Activated CD8-positive, alpha-beta T cell treated with anti-CD3 and anti-CD28 coated beads, Interleukin-2, amount 10 ng/mL, durations not matched to agents 7 days and 5 days (primary cell): ENCODE measurements at regions of chr19 and their contacts with region 1.

Region 1: DNA sequence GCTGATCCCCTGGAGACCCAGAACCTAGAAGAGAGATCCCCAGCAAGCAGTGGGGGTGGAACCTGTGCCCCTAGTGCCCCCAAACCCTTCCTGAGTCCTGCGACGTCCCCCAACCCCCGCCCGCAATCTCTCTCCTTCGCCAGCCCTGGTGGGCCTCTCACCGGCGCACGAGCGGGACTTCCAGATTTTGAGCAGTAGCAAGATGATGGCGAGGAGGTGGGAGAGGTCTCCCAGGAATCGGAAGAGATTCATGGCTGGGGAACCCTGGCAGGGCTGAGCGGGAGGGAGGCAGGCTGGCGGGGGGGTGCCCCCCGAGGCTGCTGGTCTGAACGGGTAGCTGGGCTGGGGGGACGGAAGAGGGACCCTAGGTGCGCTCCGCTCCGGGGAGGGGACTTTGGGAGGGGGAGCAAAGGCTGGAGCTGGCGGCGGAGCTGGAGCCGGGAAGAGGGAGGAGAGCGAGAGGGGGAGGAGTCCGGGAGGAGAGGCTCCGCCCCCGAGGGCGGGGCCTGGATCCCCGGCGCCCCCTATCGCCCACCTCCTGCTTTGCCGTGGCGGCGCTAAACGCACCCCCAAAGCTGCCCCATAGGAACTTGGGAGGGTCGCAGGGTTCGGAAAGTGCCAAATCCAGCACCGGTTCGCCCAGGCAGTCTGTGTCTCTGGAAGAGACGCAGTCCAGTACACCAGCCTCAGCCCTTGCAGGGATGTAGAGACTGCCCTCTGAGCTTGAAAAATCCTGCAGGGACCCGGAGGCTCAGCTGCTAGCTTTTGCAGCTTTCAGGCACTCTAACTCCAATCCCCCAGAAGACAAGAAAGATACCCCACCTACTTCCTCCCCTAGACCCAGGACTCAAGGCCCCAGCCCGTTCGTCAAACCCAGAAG is at the start of gene KDELR1:
- DNase-seq: peak; percentile 76
- ATAC-seq: peak; percentile 81
- H3K4me3 Mint-ChIP-seq: peak within 1 kb of the TSS; percentile 95
- H3K27ac Mint-ChIP-seq: peak within 1 kb of the TSS; percentile 93
- H3K4me1 Mint-ChIP-seq: peaks cover 30% of the 10 kb centered on the region
- H3K27me3 Mint-ChIP-seq: peaks cover 39% of the 10 kb centered on the region
- total RNA-seq, gene KDELR1: 70.3 to 71.3 TPM

Region 2: GRCh38 chr19:48321622-48322591 is 69.4 kb before region 1 on chr19:
- CTCF ChIA-PET with region 1: interaction called, 10 read pairs
- POLR2A ChIA-PET with region 1: no interaction called
- DNase-seq: peak; percentile 99
- ATAC-seq: peak; percentile 70
- H3K4me3 Mint-ChIP-seq: peak overlapping the region; percentile 91
- H3K27ac Mint-ChIP-seq: peak overlapping the region; percentile 98
- H3K4me1 Mint-ChIP-seq: peaks cover 60% of the 10 kb centered on the region
- H3K27me3 Mint-ChIP-seq: no peaks in the 10 kb centered on the region

Region 3: GRCh38 chr19:48342841-48343540 is 48.4 kb before region 1 on chr19:
- CTCF ChIA-PET with region 1: no interaction called
- POLR2A ChIA-PET with region 1: no interaction called
- DNase-seq: no peak
- ATAC-seq: no peak
- H3K4me3 Mint-ChIP-seq: no peak overlapping the region
- H3K27ac Mint-ChIP-seq: no peak overlapping the region
- H3K4me1 Mint-ChIP-seq: no peaks in the 10 kb centered on the region
- H3K27me3 Mint-ChIP-seq: no peaks in the 10 kb centered on the region

Region 4: DNA sequence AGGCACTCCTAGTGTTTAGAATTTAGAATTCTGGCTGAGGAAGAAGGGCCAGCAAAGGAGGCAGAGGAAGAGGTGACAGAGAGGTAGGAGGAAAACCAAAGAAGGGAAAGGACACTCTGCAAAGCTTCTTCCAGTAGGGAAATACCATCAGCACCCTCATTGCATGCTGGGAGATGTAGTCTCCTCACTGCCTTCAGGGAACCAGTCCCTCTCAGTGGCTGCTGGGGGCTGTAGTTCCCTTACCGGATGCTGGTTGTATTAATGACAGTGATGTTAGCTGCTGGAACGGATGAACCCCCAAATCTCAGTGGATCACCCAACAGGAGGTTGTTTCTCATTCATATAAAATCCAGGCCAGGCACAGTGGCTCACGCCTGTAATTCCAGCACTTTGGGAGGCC is 12.3 kb after region 1 on chr19:
- CTCF ChIA-PET with region 1: interaction called, 39 read pairs
- POLR2A ChIA-PET with region 1: interaction called, 3 read pairs
- DNase-seq: peak; percentile 83
- ATAC-seq: peak; percentile 76
- H3K4me3 Mint-ChIP-seq: no peak overlapping the region
- H3K27ac Mint-ChIP-seq: peak overlapping the region; percentile 78
- H3K4me1 Mint-ChIP-seq: peaks cover 34% of the 10 kb centered on the region
- H3K27me3 Mint-ChIP-seq: peaks cover 12% of the 10 kb centered on the region

Region 5: GRCh38 chr19:48415395-48415794 is 24.0 kb after region 1 on chr19:
- CTCF ChIA-PET with region 1: interaction called, 10 read pairs
- POLR2A ChIA-PET with region 1: no interaction called
- DNase-seq: peak; percentile 85
- ATAC-seq: peak; percentile 61
- H3K4me3 Mint-ChIP-seq: peak overlapping the region; percentile 22
- H3K27ac Mint-ChIP-seq: no peak overlapping the region
- H3K4me1 Mint-ChIP-seq: peaks cover 38% of the 10 kb centered on the region
- H3K27me3 Mint-ChIP-seq: peaks cover 31% of the 10 kb centered on the region

Region 6: GRCh38 chr19:48553676-48554386 is 162.5 kb after region 1 on chr19:
- CTCF ChIA-PET with region 1: no interaction called
- POLR2A ChIA-PET with region 1: no interaction called
- DNase-seq: no peak
- ATAC-seq: no peak
- H3K4me3 Mint-ChIP-seq: no peak overlapping the region
- H3K27ac Mint-ChIP-seq: no peak overlapping the region
- H3K4me1 Mint-ChIP-seq: peaks cover 3% of the 10 kb centered on the region
- H3K27me3 Mint-ChIP-seq: no peaks in the 10 kb centered on the region